ENCODE measurements at regions of chr7 and their contacts with region 1.

Region 1: GRCh38 chr7:94888551-94888950 is 18.8 kb upstream of the PPP1R9A start:
- DNase-seq: peak; percentile 8
- H3K4me3 ChIP-seq: no peak overlapping the region
- H3K27ac ChIP-seq: no peak overlapping the region
- H3K4me1 ChIP-seq: no peaks in the 10 kb centered on the region
- H3K27me3 ChIP-seq: no peaks in the 10 kb centered on the region
- CTCF ChIP-seq: peak in 1 of 2 donors; percentile 37

Region 2: DNA sequence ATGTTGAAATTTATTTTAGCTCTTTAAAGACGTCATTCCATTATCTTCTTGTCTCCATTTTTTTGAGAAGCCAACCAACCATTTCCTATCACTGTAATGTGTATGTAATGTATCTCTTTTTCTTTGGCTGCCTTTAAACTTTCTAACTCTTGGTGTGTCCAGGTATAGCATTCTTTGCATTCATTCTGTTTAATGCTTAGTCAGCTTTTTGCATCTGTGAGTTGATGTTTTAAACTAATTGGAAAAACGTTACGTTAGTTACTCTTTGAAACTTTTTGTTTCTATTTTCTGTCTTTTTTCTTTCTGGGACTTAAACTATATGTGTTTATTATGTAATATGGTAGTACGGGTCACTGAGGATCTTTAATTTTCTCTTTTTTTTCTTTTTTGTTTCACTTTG is 58.6 kb before region 1 on chr7:
- CTCF ChIA-PET with region 1: no interaction called
- dilution Hi-C with region 1: loop called (anchors 5 kb)
- in situ Hi-C with region 1: no loop called
- intact Hi-C with region 1: no loop called
- DNase-seq: no peak
- H3K4me3 ChIP-seq: no peak overlapping the region
- H3K27ac ChIP-seq: no peak overlapping the region
- H3K4me1 ChIP-seq: no peaks in the 10 kb centered on the region
- H3K27me3 ChIP-seq: peaks cover 2% of the 10 kb centered on the region
- CTCF ChIP-seq: no peak

Measured in mammary epithelial cell (primary cell).